Caco-2 (cell line): ENCODE measurements at regions of chr17 and their contacts with region 1.

Region 1: GRCh38 chr17:76506408-76507349 is 5.5 kb upstream of the RHBDF2 start:
- DNase-seq: peak; percentile 83 to 93
- H3K4me3 ChIP-seq: no peak overlapping the region
- H3K4me3 Mint-ChIP-seq: no peak overlapping the region
- H3K27ac Mint-ChIP-seq: no peak overlapping the region
- H3K4me1 ChIP-seq: peaks cover 17% of the 10 kb centered on the region
- H3K4me1 Mint-ChIP-seq: peaks cover 3% of the 10 kb centered on the region
- H3K27me3 ChIP-seq: no peaks in the 10 kb centered on the region
- H3K27me3 Mint-ChIP-seq: peaks cover 5% of the 10 kb centered on the region
- CTCF ChIP-seq: peak; percentile 95 to 98

Region 2: GRCh38 chr17:76166168-76166567 is 340.5 kb before region 1 on chr17:
- CTCF ChIA-PET with region 1: no interaction called
- POLR2A ChIA-PET with region 1: no interaction called
- intact Hi-C with region 1: no loop called
- DNase-seq: no peak
- H3K4me3 ChIP-seq: no peak overlapping the region
- H3K4me3 Mint-ChIP-seq: no peak overlapping the region
- H3K27ac Mint-ChIP-seq: no peak overlapping the region
- H3K4me1 ChIP-seq: no peaks in the 10 kb centered on the region
- H3K4me1 Mint-ChIP-seq: no peaks in the 10 kb centered on the region
- H3K27me3 ChIP-seq: no peaks in the 10 kb centered on the region
- H3K27me3 Mint-ChIP-seq: no peaks in the 10 kb centered on the region
- CTCF ChIP-seq: no peak

Region 3: DNA sequence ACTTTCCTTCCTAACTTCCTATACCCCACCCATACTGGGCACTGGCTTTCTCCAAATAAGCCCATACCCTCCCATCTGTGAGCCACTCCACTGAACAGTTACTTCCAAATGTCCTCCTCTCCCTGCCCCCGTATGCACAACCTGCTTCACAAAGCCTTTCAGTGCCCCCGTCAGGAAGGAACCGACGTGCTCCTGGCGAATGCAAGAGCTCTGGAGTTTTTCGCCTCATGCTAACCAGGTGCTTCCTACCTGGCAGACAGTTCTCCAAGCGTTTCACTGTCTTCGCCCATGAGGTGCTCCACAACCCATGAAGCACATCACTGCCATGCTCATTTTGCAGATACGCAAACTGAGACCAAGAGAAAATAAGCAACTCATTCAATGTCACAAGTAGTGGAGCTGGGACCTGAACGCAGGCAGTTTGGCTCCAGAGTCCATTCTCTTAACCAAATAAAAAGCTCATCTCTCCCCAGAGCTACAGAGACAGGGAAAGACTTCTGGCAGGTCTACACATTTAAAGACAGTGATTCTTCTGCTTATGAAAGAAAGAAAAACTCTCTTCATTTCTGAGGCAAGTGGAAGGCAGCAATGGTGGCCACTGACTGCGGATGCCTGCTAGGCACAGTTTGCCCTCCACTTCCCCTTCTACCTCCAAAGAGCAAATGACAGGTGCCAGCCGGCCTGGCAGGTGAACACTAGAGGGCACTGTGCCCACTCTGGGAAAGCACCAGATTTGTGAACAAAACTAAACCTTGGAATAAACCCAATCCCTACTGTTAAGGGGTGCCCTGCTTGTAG is 98.4 kb before region 1 on chr17:
- CTCF ChIA-PET with region 1: interaction called, 4 read pairs
- POLR2A ChIA-PET with region 1: no interaction called
- intact Hi-C with region 1: loop called (anchors 1 kb)
- DNase-seq: peak in 1 of 2 experiments; percentile 76
- H3K4me3 ChIP-seq: no peak overlapping the region
- H3K4me3 Mint-ChIP-seq: no peak overlapping the region
- H3K27ac Mint-ChIP-seq: no peak overlapping the region
- H3K4me1 ChIP-seq: no peaks in the 10 kb centered on the region
- H3K4me1 Mint-ChIP-seq: peaks cover 5% of the 10 kb centered on the region
- H3K27me3 ChIP-seq: no peaks in the 10 kb centered on the region
- H3K27me3 Mint-ChIP-seq: no peaks in the 10 kb centered on the region
- CTCF ChIP-seq: peak; percentile 71 to 96

Region 4: DNA sequence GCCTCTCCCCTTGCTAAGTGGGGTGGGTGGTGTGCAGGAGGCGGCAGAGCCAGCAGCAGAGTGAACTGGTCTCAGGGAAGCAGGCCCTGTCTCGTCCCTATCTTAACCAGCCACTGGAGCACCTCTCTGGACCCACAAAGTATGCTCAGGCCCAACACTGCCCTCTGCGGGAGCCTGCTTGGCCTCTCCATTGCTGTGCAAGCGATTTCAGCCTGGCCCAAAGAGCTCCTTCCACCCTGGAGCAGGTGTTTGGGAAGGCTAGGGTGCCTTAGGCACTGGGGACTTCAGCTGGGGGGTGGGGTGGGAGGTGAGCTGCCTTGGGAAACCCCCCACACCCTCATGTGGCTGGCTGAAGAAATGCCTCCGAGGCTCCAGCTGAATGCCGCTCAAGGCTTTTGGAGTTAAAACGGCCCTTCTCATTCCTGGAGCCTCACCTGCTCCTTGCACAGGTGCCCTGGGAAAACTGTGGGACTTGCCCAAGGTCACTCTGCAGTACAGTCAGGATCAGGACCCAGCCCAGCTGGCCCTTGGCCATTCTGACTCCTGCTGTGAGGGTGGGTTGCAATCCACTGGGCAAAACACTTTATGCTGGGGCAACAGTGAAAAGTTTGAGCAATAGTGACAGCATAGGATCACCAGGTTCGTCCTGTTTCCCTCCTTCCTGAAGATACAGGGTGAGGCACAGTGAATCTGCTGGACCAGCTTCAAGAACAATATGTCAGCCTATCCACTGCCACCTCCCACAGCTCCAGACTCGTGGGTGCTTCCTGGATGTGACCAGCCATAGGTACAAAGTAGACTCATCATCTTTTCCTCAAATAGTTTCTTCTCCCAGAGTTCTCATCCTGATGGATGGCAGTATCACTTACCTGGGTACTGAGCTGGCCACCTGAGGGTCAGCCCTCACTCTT is 47.8 kb before region 1 on chr17:
- CTCF ChIA-PET with region 1: interaction called, 12 read pairs
- POLR2A ChIA-PET with region 1: no interaction called
- intact Hi-C with region 1: loop called (anchors 1 kb)
- DNase-seq: peak; percentile 78 to 79
- H3K4me3 ChIP-seq: no peak overlapping the region
- H3K4me3 Mint-ChIP-seq: no peak overlapping the region
- H3K27ac Mint-ChIP-seq: no peak overlapping the region
- H3K4me1 ChIP-seq: no peaks in the 10 kb centered on the region
- H3K4me1 Mint-ChIP-seq: no peaks in the 10 kb centered on the region
- H3K27me3 ChIP-seq: no peaks in the 10 kb centered on the region
- H3K27me3 Mint-ChIP-seq: no peaks in the 10 kb centered on the region
- CTCF ChIP-seq: peak; percentile 63 to 79

Region 5: DNA sequence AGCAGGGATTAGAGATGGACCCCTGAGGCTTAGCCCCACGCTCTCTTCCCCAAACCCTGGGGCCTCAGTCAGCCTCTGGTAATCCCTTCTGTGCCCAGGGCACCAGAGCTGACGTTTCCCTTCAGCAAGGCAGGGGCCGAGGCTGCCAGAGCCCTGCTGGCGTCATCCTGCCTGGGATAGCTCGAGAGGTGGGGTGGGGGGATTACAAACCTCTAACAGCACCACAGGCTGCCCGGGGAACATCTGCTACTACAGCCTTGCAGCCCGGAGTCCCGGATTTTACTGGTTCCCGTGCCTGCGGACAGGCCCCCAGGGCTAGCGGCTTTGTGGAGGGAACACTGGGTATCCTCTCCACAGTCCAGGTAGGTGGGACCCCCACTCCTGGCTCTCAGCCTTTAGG is 39.3 kb before region 1 on chr17 and contains the start of gene AANAT:
- CTCF ChIA-PET with region 1: interaction called, 11 read pairs
- POLR2A ChIA-PET with region 1: no interaction called
- intact Hi-C with region 1: loop called (anchors 1 kb)
- DNase-seq: no peak
- H3K4me3 ChIP-seq: no peak within 1 kb of the TSS
- H3K4me3 Mint-ChIP-seq: no peak within 1 kb of the TSS
- H3K27ac Mint-ChIP-seq: peak within 1 kb of the TSS; percentile 35
- H3K4me1 ChIP-seq: 0 out of 2 replicates have a peak, but pooled peaks cover 5% of the 10 kb centered on the region
- H3K4me1 Mint-ChIP-seq: no peaks in the 10 kb centered on the region
- H3K27me3 ChIP-seq: no peaks in the 10 kb centered on the region
- H3K27me3 Mint-ChIP-seq: no peaks in the 10 kb centered on the region
- CTCF ChIP-seq: no peak
- total RNA-seq, gene AANAT: not detected in 2 replicates

Region 6: DNA sequence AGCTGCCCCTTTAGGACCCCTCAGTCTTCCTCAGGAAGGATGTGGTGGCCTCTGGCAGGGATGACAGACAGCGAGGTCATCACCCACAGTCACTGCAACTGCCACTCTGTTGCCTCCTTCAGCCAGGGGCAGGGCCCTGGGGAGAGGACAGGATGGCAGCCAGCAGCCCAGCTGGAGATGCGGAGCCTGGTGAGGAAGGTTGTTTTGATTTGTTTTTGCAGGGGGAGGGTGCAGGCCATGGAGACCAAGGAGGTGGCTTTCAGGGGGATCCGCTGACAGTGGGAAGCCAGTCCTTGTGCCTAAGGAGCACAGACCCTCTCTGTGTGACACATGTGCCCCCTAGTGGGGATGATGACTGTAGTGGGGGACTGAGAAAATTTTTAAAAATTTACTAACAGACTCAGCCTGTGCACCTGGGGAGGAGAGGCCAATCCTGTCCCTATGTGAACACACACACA is 40.5 kb after region 1 on chr17:
- CTCF ChIA-PET with region 1: interaction called, 3 read pairs
- POLR2A ChIA-PET with region 1: no interaction called
- intact Hi-C with region 1: loop called (anchors 5 kb)
- DNase-seq: peak in 1 of 2 experiments; percentile 80
- H3K4me3 ChIP-seq: no peak overlapping the region
- H3K4me3 Mint-ChIP-seq: no peak overlapping the region
- H3K27ac Mint-ChIP-seq: no peak overlapping the region
- H3K4me1 ChIP-seq: no peaks in the 10 kb centered on the region
- H3K4me1 Mint-ChIP-seq: peaks cover 5% of the 10 kb centered on the region
- H3K27me3 ChIP-seq: no peaks in the 10 kb centered on the region
- H3K27me3 Mint-ChIP-seq: no peaks in the 10 kb centered on the region
- CTCF ChIP-seq: peak; percentile 80 to 82

Region 7: GRCh38 chr17:76578344-76578979 is 71.8 kb after region 1 on chr17:
- CTCF ChIA-PET with region 1: no interaction called
- POLR2A ChIA-PET with region 1: no interaction called
- intact Hi-C with region 1: no loop called
- DNase-seq: no peak
- H3K4me3 ChIP-seq: no peak overlapping the region
- H3K4me3 Mint-ChIP-seq: no peak overlapping the region
- H3K27ac Mint-ChIP-seq: no peak overlapping the region
- H3K4me1 ChIP-seq: no peaks in the 10 kb centered on the region
- H3K4me1 Mint-ChIP-seq: no peaks in the 10 kb centered on the region
- H3K27me3 ChIP-seq: no peaks in the 10 kb centered on the region
- H3K27me3 Mint-ChIP-seq: no peaks in the 10 kb centered on the region
- CTCF ChIP-seq: no peak